Dorsolateral prefrontal cortex (tissue), 120 donors: ENCODE measurements at regions of chr6 and their contacts with region 1.

Region 1: DNA sequence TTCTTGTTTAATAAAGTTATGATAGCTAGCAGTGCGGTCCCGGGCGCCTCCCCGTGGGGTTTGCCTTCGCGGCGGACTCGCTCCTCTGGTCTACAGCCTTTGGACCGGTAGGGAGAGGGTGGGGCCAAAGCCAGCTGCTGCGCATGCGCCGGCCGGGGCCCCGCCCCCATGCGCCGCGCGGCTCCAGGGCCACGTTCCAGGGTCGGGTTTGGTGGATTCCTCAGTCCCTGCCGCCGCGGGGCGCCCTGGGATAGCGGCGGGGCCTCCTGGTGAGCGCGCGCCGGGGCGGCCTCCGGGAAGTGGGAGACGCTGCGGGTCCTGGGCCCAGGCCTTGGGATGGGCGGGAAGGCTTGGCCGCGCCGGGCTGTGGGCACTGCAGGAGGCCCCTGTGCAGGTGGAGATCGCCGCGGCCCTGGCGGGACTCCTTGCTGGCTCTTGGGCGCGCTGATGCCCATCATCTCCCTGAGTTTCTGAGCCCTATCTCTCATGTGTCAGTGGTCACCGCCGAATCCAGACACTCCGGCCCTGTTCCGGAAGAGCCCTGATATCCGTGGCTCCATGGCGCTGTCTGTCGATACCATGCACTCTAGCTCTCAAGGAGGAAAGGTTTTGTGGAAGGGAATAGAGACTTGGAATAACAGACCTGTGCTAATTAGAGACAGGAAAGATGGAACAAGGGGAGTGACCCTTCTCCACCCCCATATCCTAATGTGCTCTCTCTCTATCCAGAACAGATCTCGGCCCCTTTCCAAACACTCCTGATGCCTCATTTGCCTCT is at the start of gene VARS2:
- DNase-seq: peak; percentile 87 to 98 (median 92)
- H3K4me3 ChIP-seq: peak within 1 kb of the TSS; percentile 53 to 96 (median 73)
- H3K27ac ChIP-seq: peak within 1 kb of the TSS; percentile 58 to 100 (median 96)
- H3K27me3 ChIP-seq: no peaks in the 10 kb centered on the region
- CTCF ChIP-seq: peak; percentile 25 to 85 (median 64)
- total RNA-seq, gene VARS2: 27.9 to 82.8 (median 48.0) TPM

Region 2: GRCh38 chr6:30672445-30673253 is 241.6 kb before region 1 on chr6 and contains the start of gene DHX16:
- intact Hi-C with region 1: loop called in 1 of 2 experiments (anchors 10 kb)
- DNase-seq: peak; percentile 78 to 93 (median 90)
- H3K4me3 ChIP-seq: peak within 1 kb of the TSS; percentile 63 to 100 (median 95)
- H3K27ac ChIP-seq: peak within 1 kb of the TSS in 49 of 59 donors; percentile 12 to 91 (median 69)
- H3K27me3 ChIP-seq: no peaks in the 10 kb centered on the region
- CTCF ChIP-seq: peak; percentile 78 to 100 (median 92)
- total RNA-seq, gene DHX16: 15.0 to 28.6 (median 22.7) TPM

Region 3: GRCh38 chr6:30877419-30878371 is 36.6 kb before region 1 on chr6:
- intact Hi-C with region 1: loop called in 1 of 2 experiments (anchors 5 kb)
- DNase-seq: peak; percentile 80 to 95 (median 89)
- H3K4me3 ChIP-seq: peak overlapping the region; percentile 15 to 67 (median 50)
- H3K27ac ChIP-seq: peak overlapping the region in 58 of 59 donors; percentile 3 to 95 (median 80)
- H3K27me3 ChIP-seq: no peaks in the 10 kb centered on the region
- CTCF ChIP-seq: peak; percentile 73 to 98 (median 93)

Region 4: DNA sequence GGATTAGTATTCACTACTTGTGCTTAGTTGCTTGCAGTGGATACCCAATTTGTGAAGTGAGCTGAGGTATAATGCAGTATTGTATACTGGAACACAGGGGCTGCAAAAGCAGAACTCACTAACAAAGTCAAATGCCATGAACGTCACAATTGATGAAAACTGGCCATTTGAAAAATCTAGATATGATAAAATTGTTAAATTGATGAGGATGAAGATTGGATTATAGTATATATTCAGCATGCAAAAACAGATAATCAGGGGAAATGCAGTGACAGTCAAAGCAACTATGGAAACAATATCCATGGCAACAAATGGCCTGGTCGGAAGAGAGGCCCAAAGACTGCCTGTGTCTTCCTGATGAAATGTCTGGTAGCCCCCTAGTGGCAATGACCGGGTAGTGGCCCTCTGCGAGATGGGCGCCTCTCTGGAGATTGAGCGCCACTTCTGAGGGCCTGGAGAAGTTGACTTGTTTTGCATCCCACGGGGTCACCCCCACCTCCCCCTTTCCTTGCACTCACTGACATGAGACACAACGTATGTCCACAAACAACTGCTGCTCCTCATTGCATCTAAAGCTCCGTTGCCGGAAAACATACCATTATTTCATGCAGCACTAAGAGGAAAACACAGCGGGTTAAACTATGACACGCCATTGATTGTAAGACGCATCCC is 154.5 kb after region 1 on chr6:
- intact Hi-C with region 1: loop called (anchors 1 to 2 kb)
- DNase-seq: peak; percentile 21 to 91 (median 85)
- H3K4me3 ChIP-seq: peak overlapping the region in 34 of 59 donors; percentile 0 to 50 (median 24)
- H3K27ac ChIP-seq: peak overlapping the region; percentile 68 to 98 (median 90)
- H3K27me3 ChIP-seq: no peaks in the 10 kb centered on the region
- CTCF ChIP-seq: peak; percentile 79 to 98 (median 95)

Region 5: GRCh38 chr6:31087494-31088089 is 173.3 kb after region 1 on chr6:
- intact Hi-C with region 1: loop called (anchors 1 kb)
- DNase-seq: peak; percentile 76 to 91 (median 84)
- H3K4me3 ChIP-seq: no peak overlapping the region
- H3K27ac ChIP-seq: no peak overlapping the region
- H3K27me3 ChIP-seq: no peaks in the 10 kb centered on the region
- CTCF ChIP-seq: peak; percentile 54 to 96 (median 83)